CD4-positive, alpha-beta T cell (primary cell): ENCODE measurements at regions of chr17 and their contacts with region 1.

Region 1: DNA sequence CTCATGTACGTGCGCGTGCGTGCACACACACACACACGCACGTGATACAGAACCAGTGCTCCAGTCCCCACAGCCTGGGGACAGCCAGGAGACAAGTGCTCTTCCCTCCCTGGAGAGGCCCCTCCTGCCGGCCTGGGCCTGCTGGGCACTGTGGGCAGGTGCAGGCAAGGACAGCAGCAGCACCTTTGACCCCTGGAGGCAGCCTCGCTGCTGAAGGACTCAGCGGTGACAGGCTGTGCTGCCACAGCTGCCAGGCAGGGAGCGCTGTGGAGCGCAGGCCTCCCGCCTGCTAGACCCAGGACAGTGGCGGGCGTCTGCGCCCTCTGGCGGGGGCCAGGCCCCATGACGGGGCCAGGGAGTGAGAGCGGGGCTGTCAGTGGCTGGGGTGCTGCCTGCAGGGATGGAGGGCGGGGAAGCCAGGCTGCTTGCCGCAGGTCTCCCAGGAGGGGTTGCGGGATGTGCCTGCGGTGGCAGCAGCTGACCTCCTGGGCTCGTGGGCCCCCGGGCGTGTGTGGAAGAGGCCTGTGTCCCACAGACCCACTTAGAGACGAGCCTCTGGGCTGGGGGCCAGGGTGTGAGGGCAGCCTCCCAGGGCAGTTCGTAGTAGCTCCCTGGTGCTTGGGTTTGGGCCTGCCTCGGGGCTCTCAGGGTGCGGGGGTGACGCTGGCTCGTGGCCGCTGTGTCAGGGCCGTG is 63.5 kb upstream of the PVALEF start:
- DNase-seq: peak; percentile 80 to 93 (median 88)
- ATAC-seq: peak; percentile 100
- H3K4me3 ChIP-seq: no peak overlapping the region
- H3K4me3 Mint-ChIP-seq: peak overlapping the region; percentile 34
- H3K27ac ChIP-seq: no peak overlapping the region
- H3K27ac Mint-ChIP-seq: no peak overlapping the region
- H3K4me1 ChIP-seq: peaks cover 40% of the 10 kb centered on the region
- H3K4me1 Mint-ChIP-seq: peaks cover 3% of the 10 kb centered on the region
- H3K27me3 ChIP-seq: no peaks in the 10 kb centered on the region
- H3K27me3 Mint-ChIP-seq: no peaks in the 10 kb centered on the region
- CTCF ChIP-seq: peak; percentile 100

Region 2: DNA sequence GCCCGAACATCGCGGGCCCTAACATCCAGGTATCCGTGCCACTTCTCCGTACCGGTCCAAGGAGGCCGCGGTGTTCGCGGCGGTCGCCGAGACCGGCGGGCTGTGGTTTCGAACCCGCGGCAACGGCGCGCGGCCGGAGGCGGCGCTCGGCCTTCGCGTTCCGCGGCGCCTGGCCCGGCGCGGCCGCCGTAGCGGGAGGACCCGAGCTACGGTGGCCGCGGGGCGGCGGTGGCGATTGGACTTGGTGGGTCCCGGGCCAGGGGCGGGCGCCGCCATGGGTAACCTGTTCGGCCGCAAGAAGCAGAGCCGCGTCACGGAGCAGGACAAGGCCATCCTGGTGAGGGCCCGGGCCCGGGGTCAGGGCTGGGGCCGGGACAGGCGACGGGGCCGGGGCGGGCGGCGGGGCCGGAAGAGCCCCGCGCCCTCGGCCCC is 110.1 kb before region 1 on chr17 and contains the start of gene CHMP6:
- CTCF ChIA-PET with region 1: interaction called, 15 read pairs
- POLR2A ChIA-PET with region 1: no interaction called
- intact Hi-C with region 1: loop called (anchors 1 kb)
- DNase-seq: peak; percentile 45 to 87 (median 66)
- ATAC-seq: peak; percentile 70
- H3K4me3 ChIP-seq: peak within 1 kb of the TSS; percentile 77
- H3K4me3 Mint-ChIP-seq: peak within 1 kb of the TSS; percentile 87
- H3K27ac ChIP-seq: peak within 1 kb of the TSS in 1 of 2 donors; percentile 41
- H3K27ac Mint-ChIP-seq: peak within 1 kb of the TSS; percentile 84
- H3K4me1 ChIP-seq: peaks cover 43% of the 10 kb centered on the region
- H3K4me1 Mint-ChIP-seq: peaks cover 21% of the 10 kb centered on the region
- H3K27me3 ChIP-seq: no peaks in the 10 kb centered on the region
- H3K27me3 Mint-ChIP-seq: peaks cover 4% of the 10 kb centered on the region
- CTCF ChIP-seq: no peak
- total RNA-seq, gene CHMP6: 11.5 to 13.3 TPM

Region 3: GRCh38 chr17:81025741-81026129 is 76.0 kb before region 1 on chr17:
- CTCF ChIA-PET with region 1: interaction called, 35 read pairs
- POLR2A ChIA-PET with region 1: interaction called, 6 read pairs
- intact Hi-C with region 1: loop called (anchors 1 kb)
- DNase-seq: peak in 1 of 14 experiments; percentile 16
- ATAC-seq: no peak
- H3K4me3 ChIP-seq: no peak overlapping the region
- H3K4me3 Mint-ChIP-seq: no peak overlapping the region
- H3K27ac ChIP-seq: no peak overlapping the region
- H3K27ac Mint-ChIP-seq: no peak overlapping the region
- H3K4me1 ChIP-seq: peaks cover 12% of the 10 kb centered on the region
- H3K4me1 Mint-ChIP-seq: peaks cover 8% of the 10 kb centered on the region
- H3K27me3 ChIP-seq: peaks cover 8 to 9% of the 10 kb centered on the region in 2 experiments
- H3K27me3 Mint-ChIP-seq: peaks cover 29% of the 10 kb centered on the region
- CTCF ChIP-seq: no peak

Region 4: GRCh38 chr17:81076141-81076679 is 25.6 kb before region 1 on chr17:
- CTCF ChIA-PET with region 1: interaction called, 10 read pairs
- POLR2A ChIA-PET with region 1: no interaction called
- intact Hi-C with region 1: no loop called
- DNase-seq: no peak
- ATAC-seq: no peak
- H3K4me3 ChIP-seq: no peak overlapping the region
- H3K4me3 Mint-ChIP-seq: no peak overlapping the region
- H3K27ac ChIP-seq: no peak overlapping the region
- H3K27ac Mint-ChIP-seq: no peak overlapping the region
- H3K4me1 ChIP-seq: no peaks in the 10 kb centered on the region
- H3K4me1 Mint-ChIP-seq: no peaks in the 10 kb centered on the region
- H3K27me3 ChIP-seq: no peaks in the 10 kb centered on the region
- H3K27me3 Mint-ChIP-seq: no peaks in the 10 kb centered on the region
- CTCF ChIP-seq: no peak

Region 5: GRCh38 chr17:81238817-81239600 is 137.2 kb after region 1 on chr17 and contains the starts of genes NDUFAF8 and TEPSIN:
- CTCF ChIA-PET with region 1: interaction called, 3 read pairs
- POLR2A ChIA-PET with region 1: no interaction called
- intact Hi-C with region 1: loop called in 1 of 2 experiments (anchors 1 kb)
- DNase-seq: peak; percentile 89 to 99 (median 93)
- ATAC-seq: peak; percentile 95
- H3K4me3 ChIP-seq: peak within 1 kb of the TSS; percentile 90
- H3K4me3 Mint-ChIP-seq: peak within 1 kb of the TSS; percentile 98
- H3K27ac ChIP-seq: peak within 1 kb of the TSS in 1 of 2 donors; percentile 47
- H3K27ac Mint-ChIP-seq: peak within 1 kb of the TSS; percentile 92
- H3K4me1 ChIP-seq: peaks cover 58% of the 10 kb centered on the region
- H3K4me1 Mint-ChIP-seq: peaks cover 43% of the 10 kb centered on the region
- H3K27me3 ChIP-seq: no peaks in the 10 kb centered on the region
- H3K27me3 Mint-ChIP-seq: no peaks in the 10 kb centered on the region
- CTCF ChIP-seq: no peak
- total RNA-seq, gene NDUFAF8: 34.6 to 38.6 TPM
- total RNA-seq, gene TEPSIN: 68.2 to 74.4 TPM